ENCODE measurements at regions of chr9 and their contacts with region 1.

Region 1: DNA sequence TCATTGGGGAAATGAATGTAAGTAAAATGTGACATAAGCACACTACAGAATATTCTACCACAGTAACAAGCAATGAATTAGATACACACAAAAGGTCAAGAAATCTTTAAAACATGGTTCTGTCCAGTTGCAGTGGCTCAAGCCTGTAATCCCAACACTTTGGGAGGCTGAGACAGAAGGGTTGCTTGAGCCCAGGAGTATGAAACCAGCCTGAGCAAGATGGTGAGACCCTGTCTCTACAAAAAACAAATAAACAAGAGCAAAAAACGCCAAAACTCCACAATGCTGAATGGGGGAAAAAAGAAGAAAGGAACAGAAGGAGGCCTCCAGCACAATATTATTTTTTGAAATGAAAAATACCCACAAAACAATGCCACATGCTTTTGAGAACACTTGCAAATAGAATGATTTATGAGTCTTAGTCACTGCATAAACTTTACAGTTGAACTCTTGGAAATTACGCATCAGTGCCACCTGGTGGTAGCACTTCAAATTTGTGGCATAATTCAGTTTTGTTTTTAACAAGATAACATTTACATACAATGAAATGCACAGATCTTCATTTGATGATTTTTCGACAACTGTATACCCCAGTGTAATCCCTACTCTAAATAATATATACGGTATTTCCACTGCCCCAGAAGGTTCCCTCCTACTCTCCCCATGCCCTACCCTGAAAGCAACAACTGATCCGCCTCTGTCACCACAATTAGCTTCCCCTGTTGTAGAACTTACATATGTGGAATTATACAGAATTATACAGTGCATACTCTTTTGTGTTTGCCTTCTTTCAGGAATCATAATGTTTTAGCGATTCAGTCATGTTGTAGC is 14.4 kb upstream of the SPINK4 start:
- DNase-seq: peak; percentile 82
- ATAC-seq: peak; percentile 70
- H3K4me3 Mint-ChIP-seq: no peak overlapping the region
- H3K27ac Mint-ChIP-seq: peak overlapping the region; percentile 24
- H3K4me1 Mint-ChIP-seq: peaks cover 28% of the 10 kb centered on the region
- H3K27me3 Mint-ChIP-seq: peaks cover 5% of the 10 kb centered on the region

Region 2: DNA sequence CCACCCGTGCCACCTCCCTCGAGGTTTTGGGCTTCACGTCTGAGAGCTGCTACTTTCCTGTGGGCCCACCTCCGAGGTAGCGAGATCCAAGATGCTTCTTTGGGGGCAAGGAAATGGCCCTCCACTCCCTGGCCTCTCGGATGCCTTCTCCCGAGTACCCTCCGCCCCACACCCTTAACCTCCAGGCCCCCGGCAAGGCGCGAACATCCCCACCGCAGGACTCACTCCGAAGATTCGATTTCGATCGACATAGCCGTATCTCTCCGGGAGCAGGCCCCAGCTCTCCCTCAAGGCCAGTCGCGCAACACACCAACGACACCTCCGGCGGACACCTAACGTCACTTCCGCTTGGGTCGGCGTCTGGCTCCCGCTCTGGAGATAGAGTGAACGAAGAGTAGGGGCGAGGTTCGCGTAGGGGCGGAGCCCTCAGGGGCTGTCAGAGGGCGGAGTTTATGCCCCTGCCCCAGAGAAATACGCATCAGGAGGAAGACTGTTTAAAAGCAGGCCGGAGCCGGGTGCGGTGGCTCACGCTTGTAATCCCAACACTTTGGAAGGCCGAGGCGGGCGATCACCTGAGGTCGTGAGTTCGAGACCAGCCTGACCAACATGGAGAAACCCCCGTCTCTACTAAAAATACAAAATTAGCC is 149.1 kb before region 1 on chr9 and contains the start of gene SMU1:
- CTCF ChIA-PET with region 1: interaction called, 14 read pairs
- DNase-seq: peak; percentile 98
- ATAC-seq: peak; percentile 98
- H3K4me3 Mint-ChIP-seq: peak within 1 kb of the TSS; percentile 98
- H3K27ac Mint-ChIP-seq: peak within 1 kb of the TSS; percentile 99
- H3K4me1 Mint-ChIP-seq: peaks cover 43% of the 10 kb centered on the region
- H3K27me3 Mint-ChIP-seq: no peaks in the 10 kb centered on the region
- total RNA-seq, gene SMU1: 20.0 to 23.0 TPM

Region 3: DNA sequence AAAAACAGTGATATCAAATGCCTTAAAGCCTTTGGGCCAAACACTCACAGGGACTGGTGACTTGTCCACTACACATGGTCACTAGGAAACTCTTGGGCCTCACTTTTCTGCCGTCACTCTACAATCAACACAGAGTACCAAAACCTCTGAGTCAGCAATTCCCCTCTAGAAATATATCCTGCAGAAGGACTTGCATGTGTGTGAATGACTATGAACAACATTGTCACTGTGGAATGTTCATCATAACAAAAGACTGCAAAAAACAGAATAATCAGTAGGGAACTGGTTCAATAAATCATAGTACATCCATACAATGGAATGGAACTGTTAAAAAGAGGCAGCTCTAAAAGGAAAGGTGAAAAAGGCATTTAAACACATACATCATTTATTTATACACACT is 104.9 kb before region 1 on chr9:
- CTCF ChIA-PET with region 1: interaction called, 11 read pairs
- DNase-seq: no peak
- ATAC-seq: no peak
- H3K4me3 Mint-ChIP-seq: no peak overlapping the region
- H3K27ac Mint-ChIP-seq: peak overlapping the region; percentile 29
- H3K4me1 Mint-ChIP-seq: peaks cover 22% of the 10 kb centered on the region
- H3K27me3 Mint-ChIP-seq: no peaks in the 10 kb centered on the region

Region 4: DNA sequence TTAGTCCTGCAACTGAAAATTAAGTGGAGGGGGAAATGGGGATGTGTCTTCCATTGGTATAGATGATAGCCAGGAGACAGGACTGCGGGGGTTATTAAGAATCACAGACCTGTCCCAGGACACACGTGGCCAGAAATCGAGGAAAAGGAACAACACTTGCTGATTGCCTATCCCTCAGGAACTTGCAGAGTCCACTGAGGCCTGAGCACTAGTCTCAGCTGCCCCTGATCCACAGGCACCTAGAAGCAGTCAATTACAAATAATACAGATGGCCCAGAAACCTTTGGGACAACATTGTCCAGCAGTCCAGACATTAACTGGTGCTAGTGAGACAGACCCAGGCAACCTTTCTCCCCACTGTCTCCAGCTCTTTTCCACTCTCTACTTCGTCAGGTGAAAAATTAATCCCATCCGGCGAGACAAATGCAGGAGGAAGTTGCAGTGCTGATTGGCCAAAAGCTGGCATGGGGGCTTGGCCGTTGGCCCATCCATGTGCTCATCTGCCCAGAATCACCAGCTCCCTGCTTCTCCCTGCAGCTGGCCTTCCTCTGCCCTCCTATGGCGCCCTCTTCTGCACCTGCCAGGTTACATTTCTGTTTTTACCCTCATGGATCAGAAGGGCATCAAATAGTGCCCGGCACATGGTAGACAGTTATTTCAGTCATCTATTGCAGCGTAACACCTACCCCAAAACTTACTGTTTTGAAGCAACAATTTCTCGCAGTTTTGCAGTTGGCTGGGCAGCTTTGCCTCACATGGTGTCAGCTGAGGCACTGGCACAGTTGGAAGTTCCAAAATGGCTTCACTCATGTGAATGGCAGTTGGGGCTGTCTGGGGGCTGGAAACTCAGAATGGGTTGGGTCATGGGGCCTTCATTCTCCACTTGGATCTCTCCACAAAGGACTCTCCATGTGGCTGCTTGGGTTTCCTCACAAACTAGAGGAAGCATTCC is 54.8 kb before region 1 on chr9:
- CTCF ChIA-PET with region 1: interaction called, 11 read pairs
- DNase-seq: peak; percentile 69
- ATAC-seq: no peak
- H3K4me3 Mint-ChIP-seq: no peak overlapping the region
- H3K27ac Mint-ChIP-seq: no peak overlapping the region
- H3K4me1 Mint-ChIP-seq: peaks cover 20% of the 10 kb centered on the region
- H3K27me3 Mint-ChIP-seq: no peaks in the 10 kb centered on the region

Region 5: GRCh38 chr9:33206401-33206800 is 19.1 kb before region 1 on chr9:
- CTCF ChIA-PET with region 1: interaction called, 15 read pairs
- DNase-seq: no peak
- ATAC-seq: no peak
- H3K4me3 Mint-ChIP-seq: no peak overlapping the region
- H3K27ac Mint-ChIP-seq: no peak overlapping the region
- H3K4me1 Mint-ChIP-seq: peaks cover 23% of the 10 kb centered on the region
- H3K27me3 Mint-ChIP-seq: peaks cover 4% of the 10 kb centered on the region

Region 6: GRCh38 chr9:33306037-33306436 is 80.5 kb after region 1 on chr9:
- CTCF ChIA-PET with region 1: no interaction called
- DNase-seq: peak; percentile 55
- ATAC-seq: peak; percentile 91
- H3K4me3 Mint-ChIP-seq: no peak overlapping the region
- H3K27ac Mint-ChIP-seq: no peak overlapping the region
- H3K4me1 Mint-ChIP-seq: peaks cover 30% of the 10 kb centered on the region
- H3K27me3 Mint-ChIP-seq: no peaks in the 10 kb centered on the region